ENCODE measurements at regions of chr11 and their contacts with region 1.

Region 1: DNA sequence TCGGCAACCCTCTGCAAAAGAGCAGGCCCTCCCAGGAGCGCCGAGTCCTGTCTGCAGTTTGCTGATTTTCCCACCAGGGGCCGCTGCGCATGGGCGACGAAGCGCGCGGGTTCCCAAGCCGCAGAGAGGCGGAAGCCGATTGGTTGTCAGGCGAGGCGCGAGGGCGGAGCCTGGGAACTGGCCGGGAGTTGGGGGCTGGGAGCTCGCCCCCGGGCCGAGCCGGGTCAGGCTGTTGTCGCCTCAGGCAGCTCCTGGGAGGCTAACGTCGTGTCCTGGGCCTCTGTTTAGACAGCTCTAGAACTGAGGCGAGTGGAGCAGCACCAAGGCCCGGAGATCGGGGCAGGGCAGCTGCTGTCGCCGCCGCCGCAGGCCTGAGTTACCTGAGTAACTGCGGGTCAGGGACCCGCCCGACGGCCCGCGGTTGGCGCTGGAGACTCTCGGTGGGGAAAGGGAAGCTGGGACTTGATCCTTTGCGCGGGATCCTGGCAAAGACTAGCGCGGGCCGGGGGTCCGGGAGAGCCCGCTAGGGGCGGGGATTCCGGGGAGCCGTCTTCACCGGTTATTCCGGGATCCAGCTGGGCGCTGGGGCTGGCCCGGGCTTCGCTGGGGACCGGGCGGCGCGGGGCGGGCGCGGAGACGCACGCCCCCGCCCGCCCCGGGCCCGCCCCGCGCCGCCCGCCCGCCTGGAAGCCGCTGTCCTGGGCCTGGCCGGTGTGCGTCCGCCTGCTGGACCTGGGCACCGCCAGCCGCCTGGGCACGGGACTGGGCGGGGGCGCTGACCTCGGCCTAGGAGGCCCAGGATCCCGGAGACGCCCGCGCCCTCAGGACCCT is at the start of gene STIM1:
- DNase-seq: peak; percentile 92 to 99 (median 97)
- ATAC-seq: peak; percentile 69
- H3K4me3 ChIP-seq: peak within 1 kb of the TSS; percentile 95
- H3K4me3 Mint-ChIP-seq: peak within 1 kb of the TSS; percentile 89
- H3K27ac ChIP-seq: peak within 1 kb of the TSS; percentile 88 to 91
- H3K27ac Mint-ChIP-seq: peak within 1 kb of the TSS; percentile 99
- H3K4me1 ChIP-seq: peaks cover 63% of the 10 kb centered on the region
- H3K4me1 Mint-ChIP-seq: peaks cover 67% of the 10 kb centered on the region
- H3K27me3 ChIP-seq: no peaks in the 10 kb centered on the region
- H3K27me3 Mint-ChIP-seq: no peaks in the 10 kb centered on the region
- CTCF ChIP-seq: peak; percentile 94
- total RNA-seq, gene STIM1: 89.0 to 94.9 TPM

Region 2: GRCh38 chr11:3781423-3781822 is 73.8 kb before region 1 on chr11:
- CTCF ChIA-PET with region 1: interaction called, 3 read pairs
- POLR2A ChIA-PET with region 1: interaction called, 10 read pairs
- intact Hi-C with region 1: no loop called
- DNase-seq: peak in 2 of 14 experiments; percentile 51 to 61
- ATAC-seq: no peak
- H3K4me3 ChIP-seq: no peak overlapping the region
- H3K4me3 Mint-ChIP-seq: no peak overlapping the region
- H3K27ac ChIP-seq: no peak overlapping the region
- H3K27ac Mint-ChIP-seq: peak overlapping the region; percentile 47
- H3K4me1 ChIP-seq: peaks cover 27% of the 10 kb centered on the region
- H3K4me1 Mint-ChIP-seq: peaks cover 50% of the 10 kb centered on the region
- H3K27me3 ChIP-seq: no peaks in the 10 kb centered on the region
- H3K27me3 Mint-ChIP-seq: no peaks in the 10 kb centered on the region
- CTCF ChIP-seq: no peak

Region 3: DNA sequence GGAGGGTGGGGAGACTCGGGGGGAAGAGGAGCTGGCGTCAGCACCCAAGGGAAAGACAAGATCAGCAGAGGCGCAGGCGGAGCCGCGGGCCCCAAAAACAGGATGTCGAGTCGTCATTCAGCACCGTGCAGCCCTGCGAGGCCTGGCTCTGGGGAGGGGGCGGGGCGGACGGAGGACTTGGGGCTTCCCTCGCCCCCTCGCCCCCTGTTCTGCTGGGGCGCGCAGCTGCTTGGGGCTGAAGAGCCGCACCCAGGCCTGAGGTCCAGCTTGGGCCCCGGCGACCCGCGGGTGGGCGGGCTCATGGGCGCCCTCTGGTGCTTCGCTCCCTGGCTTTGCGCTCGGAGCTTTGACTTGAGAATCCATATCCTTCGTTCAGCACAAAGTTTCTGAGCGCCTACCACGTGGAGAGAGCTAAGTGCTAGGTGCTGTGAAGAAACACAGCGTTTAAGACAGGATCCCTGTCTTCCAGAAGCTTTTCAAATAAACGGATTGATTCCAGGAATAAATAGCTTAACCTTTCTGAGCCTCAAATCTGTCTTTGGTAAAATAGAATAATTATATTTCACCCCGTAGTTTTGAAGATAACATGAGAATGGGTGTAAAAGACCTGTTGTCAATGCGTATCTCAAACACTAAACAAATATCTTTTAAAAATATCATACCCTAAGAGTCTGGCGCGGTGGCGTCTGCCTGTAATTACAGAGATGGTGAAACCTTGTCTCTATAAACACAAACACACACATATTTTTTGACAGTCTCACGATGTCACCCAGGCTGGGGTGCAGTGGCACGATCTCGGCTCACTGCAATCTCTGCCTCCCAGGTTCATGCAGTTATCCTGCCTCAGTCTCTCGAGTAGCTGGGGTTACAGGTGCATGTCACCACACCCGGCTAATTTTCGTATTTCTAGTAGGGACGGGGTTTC is 13.5 kb before region 1 on chr11:
- CTCF ChIA-PET with region 1: interaction called, 216 read pairs
- POLR2A ChIA-PET with region 1: interaction called, 577 read pairs
- intact Hi-C with region 1: loop called (anchors 1 kb)
- DNase-seq: peak; percentile 85 to 98 (median 92)
- ATAC-seq: peak; percentile 72
- H3K4me3 ChIP-seq: peak overlapping the region; percentile 95
- H3K4me3 Mint-ChIP-seq: peak overlapping the region; percentile 97
- H3K27ac ChIP-seq: peak overlapping the region; percentile 95 to 97
- H3K27ac Mint-ChIP-seq: peak overlapping the region; percentile 95
- H3K4me1 ChIP-seq: peaks cover 40% of the 10 kb centered on the region
- H3K4me1 Mint-ChIP-seq: peaks cover 61% of the 10 kb centered on the region
- H3K27me3 ChIP-seq: no peaks in the 10 kb centered on the region
- H3K27me3 Mint-ChIP-seq: no peaks in the 10 kb centered on the region
- CTCF ChIP-seq: peak; percentile 92

Region 4: DNA sequence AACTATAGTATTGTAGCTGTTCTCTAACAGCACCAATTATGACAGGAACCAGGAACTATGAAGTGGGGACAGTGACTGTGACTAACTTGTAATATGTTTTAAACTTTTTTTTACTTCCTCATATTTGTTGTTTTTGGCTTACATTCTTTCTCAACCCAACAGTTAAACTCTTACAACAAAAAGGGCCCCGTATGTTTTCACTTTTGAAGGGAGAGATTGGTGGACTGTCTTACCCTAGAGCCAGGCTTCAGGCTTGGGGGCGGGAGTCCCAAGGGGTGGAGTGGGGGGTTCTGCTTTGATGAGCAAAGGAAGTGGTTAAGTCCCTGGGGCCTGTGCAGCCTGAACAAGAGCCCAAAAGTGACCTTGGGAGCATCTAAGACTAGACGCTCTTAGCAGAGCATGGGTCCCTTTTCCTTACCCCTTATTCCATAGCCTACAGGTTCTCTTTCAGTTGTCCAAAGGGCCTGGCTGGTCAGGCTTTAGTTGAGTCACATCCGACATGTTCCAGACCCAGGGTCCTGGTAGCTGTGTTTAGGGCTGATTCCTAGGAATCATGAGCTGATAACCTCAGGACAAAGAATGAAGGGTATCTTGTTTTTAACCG is 39.0 kb after region 1 on chr11:
- CTCF ChIA-PET with region 1: interaction called, 7 read pairs
- POLR2A ChIA-PET with region 1: interaction called, 15 read pairs
- intact Hi-C with region 1: no loop called
- DNase-seq: peak in 3 of 14 experiments; percentile 16 to 28 (median 23)
- ATAC-seq: peak; percentile 34
- H3K4me3 ChIP-seq: no peak overlapping the region
- H3K4me3 Mint-ChIP-seq: no peak overlapping the region
- H3K27ac ChIP-seq: peak overlapping the region in 1 of 2 donors; percentile 41
- H3K27ac Mint-ChIP-seq: peak overlapping the region; percentile 69
- H3K4me1 ChIP-seq: peaks cover 25% of the 10 kb centered on the region
- H3K4me1 Mint-ChIP-seq: peaks cover 64% of the 10 kb centered on the region
- H3K27me3 ChIP-seq: no peaks in the 10 kb centered on the region
- H3K27me3 Mint-ChIP-seq: no peaks in the 10 kb centered on the region
- CTCF ChIP-seq: no peak

Region 5: DNA sequence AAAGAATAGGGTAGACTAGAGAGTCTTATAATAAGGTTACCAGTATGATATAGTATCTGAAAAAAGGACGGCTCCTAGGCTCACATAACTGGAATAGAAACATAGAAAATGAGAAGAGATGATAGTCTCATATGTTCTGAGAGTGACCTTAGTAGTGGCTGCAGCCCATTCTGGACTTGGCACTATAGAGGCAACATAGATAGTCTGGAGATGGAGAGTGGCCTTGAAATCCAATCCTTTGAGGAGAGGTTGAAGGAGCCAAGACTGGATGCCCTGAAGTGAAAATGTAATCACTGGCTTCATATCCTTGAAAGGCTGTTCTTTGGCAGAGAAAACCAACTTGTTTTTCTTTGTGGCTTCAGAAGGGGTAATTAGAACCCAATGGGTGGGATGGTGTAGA is 81.3 kb after region 1 on chr11:
- CTCF ChIA-PET with region 1: interaction called, 14 read pairs
- POLR2A ChIA-PET with region 1: interaction called, 56 read pairs
- intact Hi-C with region 1: no loop called
- DNase-seq: no peak
- ATAC-seq: no peak
- H3K4me3 ChIP-seq: no peak overlapping the region
- H3K4me3 Mint-ChIP-seq: no peak overlapping the region
- H3K27ac ChIP-seq: no peak overlapping the region
- H3K27ac Mint-ChIP-seq: peak overlapping the region; percentile 56
- H3K4me1 ChIP-seq: peaks cover 24% of the 10 kb centered on the region
- H3K4me1 Mint-ChIP-seq: peaks cover 74% of the 10 kb centered on the region
- H3K27me3 ChIP-seq: no peaks in the 10 kb centered on the region
- H3K27me3 Mint-ChIP-seq: no peaks in the 10 kb centered on the region
- CTCF ChIP-seq: no peak

Region 6: GRCh38 chr11:3984896-3985295 is 129.7 kb after region 1 on chr11:
- CTCF ChIA-PET with region 1: interaction called, 14 read pairs
- POLR2A ChIA-PET with region 1: interaction called, 16 read pairs
- intact Hi-C with region 1: loop called (anchors 2 to 5 kb)
- DNase-seq: peak in 12 of 14 experiments; percentile 7 to 64 (median 34)
- ATAC-seq: peak; percentile 71
- H3K4me3 ChIP-seq: no peak overlapping the region
- H3K4me3 Mint-ChIP-seq: no peak overlapping the region
- H3K27ac ChIP-seq: no peak overlapping the region
- H3K27ac Mint-ChIP-seq: peak overlapping the region; percentile 79
- H3K4me1 ChIP-seq: peaks cover 26% of the 10 kb centered on the region
- H3K4me1 Mint-ChIP-seq: peaks cover 93% of the 10 kb centered on the region
- H3K27me3 ChIP-seq: no peaks in the 10 kb centered on the region
- H3K27me3 Mint-ChIP-seq: no peaks in the 10 kb centered on the region
- CTCF ChIP-seq: peak; percentile 42

Region 7: DNA sequence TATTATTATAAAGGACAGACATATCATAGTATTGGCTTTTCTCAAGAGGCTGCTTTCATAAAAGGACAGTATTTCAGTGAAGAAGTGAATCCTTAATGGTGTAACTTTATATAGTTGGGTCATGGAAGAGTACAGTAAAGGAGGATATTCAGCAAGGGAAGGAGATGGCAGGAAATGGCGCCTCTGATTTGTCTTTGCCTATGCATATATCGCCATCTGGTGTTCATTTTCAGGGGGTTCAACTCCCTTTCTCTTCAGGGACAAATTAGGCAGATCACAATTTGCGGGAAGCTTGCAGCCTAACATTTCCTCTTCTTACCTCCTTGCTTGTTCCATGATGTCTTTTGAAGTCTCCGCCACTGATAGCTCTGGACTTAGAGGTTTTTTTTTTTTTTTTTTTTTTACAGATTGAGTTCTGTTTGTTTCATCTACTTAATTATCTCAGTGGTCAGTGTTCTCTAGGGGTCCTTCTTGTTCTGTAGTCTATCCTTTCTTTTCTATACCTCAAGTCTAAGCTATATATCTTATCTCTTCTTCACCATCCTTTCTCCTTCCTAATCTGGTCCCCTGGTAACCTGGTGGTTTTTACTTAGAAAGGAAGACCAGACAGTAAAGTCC is 217.6 kb after region 1 on chr11:
- CTCF ChIA-PET with region 1: interaction called, 52 read pairs
- POLR2A ChIA-PET with region 1: interaction called, 76 read pairs
- intact Hi-C with region 1: no loop called
- DNase-seq: peak in 9 of 14 experiments; percentile 19 to 87 (median 48)
- ATAC-seq: peak; percentile 78
- H3K4me3 ChIP-seq: no peak overlapping the region
- H3K4me3 Mint-ChIP-seq: no peak overlapping the region
- H3K27ac ChIP-seq: no peak overlapping the region
- H3K27ac Mint-ChIP-seq: peak overlapping the region; percentile 69
- H3K4me1 ChIP-seq: peaks cover 27% of the 10 kb centered on the region
- H3K4me1 Mint-ChIP-seq: peaks cover 84% of the 10 kb centered on the region
- H3K27me3 ChIP-seq: no peaks in the 10 kb centered on the region
- H3K27me3 Mint-ChIP-seq: no peaks in the 10 kb centered on the region
- CTCF ChIP-seq: peak; percentile 80

Measured in CD4-positive, alpha-beta T cell (primary cell).